Calu3 (cell line): ENCODE measurements at regions of chr1 and their contacts with region 1.

Region 1: GRCh38 chr1:30099587-30100523 is 623.5 kb downstream of the MATN1 start:
- DNase-seq: no peak
- H3K4me3 Mint-ChIP-seq: no peak overlapping the region
- H3K27ac Mint-ChIP-seq: no peak overlapping the region
- H3K4me1 Mint-ChIP-seq: no peaks in the 10 kb centered on the region
- H3K27me3 Mint-ChIP-seq: peaks cover 79% of the 10 kb centered on the region
- CTCF ChIP-seq: no peak

Region 2: GRCh38 chr1:29960876-29961275 is 139.0 kb before region 1 on chr1:
- CTCF ChIA-PET with region 1: no interaction called
- intact Hi-C with region 1: no loop called
- DNase-seq: no peak
- H3K4me3 Mint-ChIP-seq: no peak overlapping the region
- H3K27ac Mint-ChIP-seq: no peak overlapping the region
- H3K4me1 Mint-ChIP-seq: no peaks in the 10 kb centered on the region
- H3K27me3 Mint-ChIP-seq: peaks cover 10% of the 10 kb centered on the region
- CTCF ChIP-seq: no peak

Region 3: GRCh38 chr1:30191154-30191702 is 91.4 kb after region 1 on chr1:
- CTCF ChIA-PET with region 1: no interaction called
- intact Hi-C with region 1: no loop called
- DNase-seq: no peak
- H3K4me3 Mint-ChIP-seq: no peak overlapping the region
- H3K27ac Mint-ChIP-seq: no peak overlapping the region
- H3K4me1 Mint-ChIP-seq: no peaks in the 10 kb centered on the region
- H3K27me3 Mint-ChIP-seq: peaks cover 42% of the 10 kb centered on the region
- CTCF ChIP-seq: no peak

Region 4: GRCh38 chr1:30489737-30490389 is 390.0 kb after region 1 on chr1:
- CTCF ChIA-PET with region 1: no interaction called
- intact Hi-C with region 1: loop called (anchors 5 kb)
- DNase-seq: no peak
- H3K4me3 Mint-ChIP-seq: no peak overlapping the region
- H3K27ac Mint-ChIP-seq: no peak overlapping the region
- H3K4me1 Mint-ChIP-seq: no peaks in the 10 kb centered on the region
- H3K27me3 Mint-ChIP-seq: no peaks in the 10 kb centered on the region
- CTCF ChIP-seq: no peak